ENCODE measurements at regions of chr20 and their contacts with region 1.

Region 1: DNA sequence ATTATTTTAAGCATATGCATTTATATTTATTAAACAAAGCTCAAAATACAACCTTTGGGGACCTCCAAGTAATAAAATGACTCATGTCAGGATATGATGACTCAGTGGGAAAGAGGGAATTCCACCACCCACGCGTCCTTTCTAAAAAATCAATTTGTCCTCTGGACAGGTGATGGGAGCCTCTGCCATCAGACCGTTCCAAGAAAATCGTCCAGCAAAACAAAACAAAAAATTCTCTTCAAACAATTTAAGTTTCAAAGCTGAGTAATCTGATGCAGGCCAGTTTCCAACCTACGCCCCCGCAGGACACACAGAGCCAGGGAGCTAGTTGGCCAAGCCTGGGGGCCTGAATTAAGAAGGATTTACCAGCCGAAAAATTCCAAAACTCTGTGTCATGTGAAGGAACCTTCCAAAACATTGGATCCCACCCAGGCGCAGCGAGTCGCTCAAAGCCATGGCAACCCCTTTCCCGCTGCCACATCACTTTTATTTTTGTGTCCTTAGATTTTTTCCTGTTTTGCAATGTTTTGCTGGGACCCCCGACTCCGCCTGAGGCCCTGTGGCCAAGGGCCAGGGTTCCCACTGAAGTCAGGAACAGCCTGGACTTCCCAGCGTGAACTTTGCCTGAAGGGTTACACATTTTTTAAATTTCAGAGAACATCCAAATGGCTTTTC is 95.3 kb downstream of the NFATC2 start:
- DNase-seq: peak in 1 of 2 donors; percentile 66
- ATAC-seq: peak in 6 of 8 donors; percentile 33 to 72 (median 64)
- H3K4me3 ChIP-seq: no peak overlapping the region
- H3K27ac ChIP-seq: peak overlapping the region in 3 of 10 donors; percentile 5 to 44 (median 9)
- H3K4me1 ChIP-seq: peaks cover 13 to 57% (median 34%) of the 10 kb centered on the region in 9 donors
- H3K27me3 ChIP-seq: no peaks in the 10 kb centered on the region
- CTCF ChIP-seq: no peak

Region 2: DNA sequence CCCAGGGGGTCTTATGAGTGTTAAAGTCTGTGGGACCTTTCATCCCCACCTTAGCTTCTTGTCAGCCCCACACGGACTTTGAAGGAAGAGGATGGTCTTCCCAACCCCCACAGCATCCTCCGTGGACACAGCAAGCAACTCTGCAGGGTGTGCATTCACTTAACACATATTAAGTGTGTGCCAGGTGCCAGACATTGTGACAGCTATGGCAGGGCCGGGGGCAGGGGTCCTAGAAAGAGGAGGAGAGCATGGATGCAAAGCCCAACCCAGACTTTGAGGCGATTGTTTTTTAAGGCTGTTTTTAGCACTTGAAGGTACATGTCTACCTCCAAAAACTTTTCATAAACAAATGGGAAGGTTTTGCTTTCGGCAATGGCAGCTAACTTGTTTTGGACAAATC is 302.8 kb before region 1 on chr20:
- intact Hi-C with region 1: no loop called
- DNase-seq: no peak
- ATAC-seq: no peak
- H3K4me3 ChIP-seq: no peak overlapping the region
- H3K27ac ChIP-seq: no peak overlapping the region
- H3K4me1 ChIP-seq: no peaks in the 10 kb centered on the region
- H3K27me3 ChIP-seq: peaks cover 0 to 33% (median 9%) of the 10 kb centered on the region in 7 donors
- CTCF ChIP-seq: no peak

Region 3: GRCh38 chr20:51541189-51542032 is 94.2 kb after region 1 on chr20:
- intact Hi-C with region 1: loop called in 1 of 10 experiments (anchors 5 kb)
- DNase-seq: peak; percentile 67 to 92
- ATAC-seq: peak; percentile 87 to 96 (median 92)
- H3K4me3 ChIP-seq: peak overlapping the region in 9 of 10 donors; percentile 34 to 61 (median 50)
- H3K27ac ChIP-seq: peak overlapping the region; percentile 51 to 92 (median 80)
- H3K4me1 ChIP-seq: peaks cover 16 to 45% (median 35%) of the 10 kb centered on the region in 9 donors
- H3K27me3 ChIP-seq: peaks cover 0 to 35% (median 0%) of the 10 kb centered on the region in 7 donors
- CTCF ChIP-seq: peak in 1 of 9 donors; percentile 19

Region 4: GRCh38 chr20:51562332-51563155 is 115.3 kb after region 1 on chr20:
- intact Hi-C with region 1: loop called in 3 of 10 experiments (anchors 5 to 10 kb)
- DNase-seq: peak; percentile 79 to 94
- ATAC-seq: peak; percentile 75 to 91 (median 84)
- H3K4me3 ChIP-seq: peak overlapping the region; percentile 19 to 72 (median 59)
- H3K27ac ChIP-seq: peak overlapping the region; percentile 66 to 96 (median 86)
- H3K4me1 ChIP-seq: peaks cover 8 to 63% (median 45%) of the 10 kb centered on the region in 9 donors
- H3K27me3 ChIP-seq: peaks cover 0 to 69% (median 0%) of the 10 kb centered on the region in 7 donors
- CTCF ChIP-seq: peak in 7 of 9 donors; percentile 15 to 64 (median 39)

Region 5: GRCh38 chr20:51569827-51570738 is 122.8 kb after region 1 on chr20:
- intact Hi-C with region 1: loop called in 3 of 10 experiments (anchors 5 to 10 kb)
- DNase-seq: peak; percentile 42 to 65
- ATAC-seq: peak; percentile 61 to 93 (median 89)
- H3K4me3 ChIP-seq: peak overlapping the region in 7 of 10 donors; percentile 9 to 43 (median 34)
- H3K27ac ChIP-seq: peak overlapping the region; percentile 44 to 91 (median 80)
- H3K4me1 ChIP-seq: peaks cover 0 to 42% (median 21%) of the 10 kb centered on the region in 9 donors
- H3K27me3 ChIP-seq: peaks cover 0 to 5% (median 0%) of the 10 kb centered on the region in 7 donors
- CTCF ChIP-seq: no peak

Region 6: GRCh38 chr20:51800060-51800794 is 353.0 kb after region 1 on chr20:
- intact Hi-C with region 1: no loop called
- DNase-seq: peak; percentile 48 to 57
- ATAC-seq: peak; percentile 47 to 79 (median 66)
- H3K4me3 ChIP-seq: peak overlapping the region in 9 of 10 donors; percentile 29 to 59 (median 52)
- H3K27ac ChIP-seq: no peak overlapping the region
- H3K4me1 ChIP-seq: peaks cover 2 to 25% (median 19%) of the 10 kb centered on the region in 9 donors
- H3K27me3 ChIP-seq: peaks cover 0 to 83% (median 69%) of the 10 kb centered on the region in 7 donors
- CTCF ChIP-seq: peak; percentile 58 to 83 (median 79)

Measured in heart right ventricle (tissue), 16 donors.